ENCODE measurements at regions of chr2 and their contacts with region 1.

Region 1: DNA sequence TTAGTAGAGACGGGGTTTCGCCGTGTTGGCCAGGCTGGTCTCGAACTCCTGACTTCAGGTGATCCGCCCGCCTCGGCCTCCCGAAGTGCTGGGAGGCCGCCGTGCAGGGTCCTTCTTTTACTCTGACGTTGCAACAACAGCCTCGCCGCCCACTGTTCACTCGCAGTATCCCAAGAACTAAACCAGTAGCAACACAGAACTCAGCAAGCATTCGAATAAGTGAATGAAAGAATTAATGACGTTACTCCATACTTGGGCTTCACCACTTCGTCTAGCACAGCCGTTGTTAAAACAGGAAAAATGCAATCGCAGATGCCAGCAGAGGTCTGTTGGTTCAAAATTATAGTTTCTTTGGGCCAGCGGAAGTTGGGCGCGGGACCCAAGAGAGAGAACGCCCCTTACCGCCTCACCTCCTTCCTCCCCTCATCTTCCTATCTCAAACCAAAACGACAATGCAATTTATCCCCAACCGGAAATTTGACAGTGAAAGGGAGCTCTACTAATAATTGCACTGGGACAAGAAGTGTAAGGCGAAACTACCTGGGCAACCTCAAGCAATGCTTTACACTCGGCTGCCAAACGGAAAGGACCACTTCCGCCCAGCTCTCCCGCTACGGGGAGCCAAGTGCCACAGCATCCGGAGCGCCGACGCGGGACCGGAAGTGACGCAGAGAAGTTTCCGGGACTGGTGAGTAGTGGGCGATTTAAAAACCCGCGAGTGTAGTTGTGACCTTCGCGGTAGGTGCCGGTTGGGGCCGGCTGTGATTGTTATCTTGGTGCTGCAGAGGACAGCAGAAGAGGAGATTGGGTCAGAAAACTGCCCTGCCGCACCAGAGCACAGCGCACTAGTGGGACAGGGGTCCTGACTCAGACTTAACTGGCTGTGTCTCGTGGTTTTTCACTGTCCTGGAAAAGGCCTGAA is at the starts of genes NIF3L1 and PPIL3:
- DNase-seq: peak; percentile 93 to 99 (median 95)
- ATAC-seq: peak; percentile 67
- H3K4me3 ChIP-seq: peak within 1 kb of the TSS; percentile 64
- H3K4me3 Mint-ChIP-seq: peak within 1 kb of the TSS; percentile 94
- H3K27ac ChIP-seq: peak within 1 kb of the TSS; percentile 92 to 94
- H3K27ac Mint-ChIP-seq: peak within 1 kb of the TSS; percentile 99
- H3K4me1 ChIP-seq: peaks cover 36% of the 10 kb centered on the region
- H3K4me1 Mint-ChIP-seq: peaks cover 42% of the 10 kb centered on the region
- H3K27me3 ChIP-seq: no peaks in the 10 kb centered on the region
- H3K27me3 Mint-ChIP-seq: no peaks in the 10 kb centered on the region
- CTCF ChIP-seq: no peak
- total RNA-seq, gene NIF3L1: 6.1 to 6.7 TPM
- total RNA-seq, gene PPIL3: 23.1 to 29.8 TPM

Region 2: DNA sequence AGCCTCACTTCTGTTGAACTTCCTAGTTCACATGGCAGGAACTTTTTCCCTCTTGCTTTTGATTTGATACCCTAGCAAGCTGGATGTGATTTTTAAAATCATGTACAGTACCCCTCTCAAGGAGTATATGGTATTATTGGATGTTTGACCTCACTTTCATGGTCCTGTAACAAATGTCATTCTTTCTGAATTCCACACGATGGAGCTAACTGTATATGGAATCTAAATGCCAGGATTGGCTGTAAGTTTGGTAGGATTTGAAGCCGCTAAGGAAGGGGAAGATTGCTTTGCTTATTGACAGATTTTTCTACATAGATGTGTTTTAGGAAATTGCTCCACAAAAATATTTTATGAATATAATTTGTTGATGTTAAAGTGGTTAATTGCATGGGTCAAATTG is 915.3 kb before region 1 on chr2:
- CTCF ChIA-PET with region 1: no interaction called
- POLR2A ChIA-PET with region 1: no interaction called
- intact Hi-C with region 1: no loop called
- DNase-seq: no peak
- ATAC-seq: no peak
- H3K4me3 ChIP-seq: no peak overlapping the region
- H3K4me3 Mint-ChIP-seq: no peak overlapping the region
- H3K27ac ChIP-seq: no peak overlapping the region
- H3K27ac Mint-ChIP-seq: no peak overlapping the region
- H3K4me1 ChIP-seq: no peaks in the 10 kb centered on the region
- H3K4me1 Mint-ChIP-seq: no peaks in the 10 kb centered on the region
- H3K27me3 ChIP-seq: no peaks in the 10 kb centered on the region
- H3K27me3 Mint-ChIP-seq: no peaks in the 10 kb centered on the region
- CTCF ChIP-seq: peak; percentile 30

Region 3: DNA sequence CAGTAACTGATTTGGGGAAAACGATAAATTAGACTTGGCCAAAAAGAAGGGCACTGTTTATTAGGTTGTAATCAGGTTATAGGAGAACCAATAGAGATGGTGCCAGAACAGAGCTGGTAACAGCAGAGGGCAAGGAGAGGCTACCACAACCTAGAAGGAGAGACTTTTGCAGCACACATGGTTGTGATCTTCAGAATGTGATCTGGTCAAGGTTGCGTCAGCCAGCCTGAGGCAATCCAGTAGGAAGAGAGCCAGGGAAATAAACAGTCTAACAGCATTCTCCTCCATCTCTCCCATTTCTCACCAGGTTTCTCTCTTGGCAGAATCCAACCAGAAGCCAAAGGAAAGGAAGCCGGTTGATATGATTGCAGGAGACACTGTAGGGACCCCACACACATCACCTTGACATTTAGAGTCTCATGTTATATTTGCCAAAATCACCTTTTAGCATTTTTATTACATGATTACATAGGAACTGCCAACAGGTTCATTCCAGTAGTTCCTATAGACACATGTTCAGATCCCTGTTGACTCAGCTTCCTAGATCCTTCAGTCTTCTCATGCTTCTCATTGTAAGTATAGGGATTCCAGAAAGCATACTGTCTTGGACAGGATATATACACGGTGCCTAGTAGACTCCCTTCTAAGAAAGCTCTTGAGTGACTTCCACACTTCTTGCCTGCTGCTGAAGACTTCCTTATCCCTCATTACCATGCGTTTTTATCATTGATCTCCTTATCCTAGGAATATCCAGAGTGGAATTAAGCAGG is 600.1 kb before region 1 on chr2:
- CTCF ChIA-PET with region 1: no interaction called
- POLR2A ChIA-PET with region 1: no interaction called
- intact Hi-C with region 1: no loop called
- DNase-seq: no peak
- ATAC-seq: no peak
- H3K4me3 ChIP-seq: no peak overlapping the region
- H3K4me3 Mint-ChIP-seq: no peak overlapping the region
- H3K27ac ChIP-seq: no peak overlapping the region
- H3K27ac Mint-ChIP-seq: no peak overlapping the region
- H3K4me1 ChIP-seq: no peaks in the 10 kb centered on the region
- H3K4me1 Mint-ChIP-seq: no peaks in the 10 kb centered on the region
- H3K27me3 ChIP-seq: peaks cover 0 to under 1% of the 10 kb centered on the region in 2 experiments
- H3K27me3 Mint-ChIP-seq: peaks cover 26% of the 10 kb centered on the region
- CTCF ChIP-seq: no peak

Region 4: DNA sequence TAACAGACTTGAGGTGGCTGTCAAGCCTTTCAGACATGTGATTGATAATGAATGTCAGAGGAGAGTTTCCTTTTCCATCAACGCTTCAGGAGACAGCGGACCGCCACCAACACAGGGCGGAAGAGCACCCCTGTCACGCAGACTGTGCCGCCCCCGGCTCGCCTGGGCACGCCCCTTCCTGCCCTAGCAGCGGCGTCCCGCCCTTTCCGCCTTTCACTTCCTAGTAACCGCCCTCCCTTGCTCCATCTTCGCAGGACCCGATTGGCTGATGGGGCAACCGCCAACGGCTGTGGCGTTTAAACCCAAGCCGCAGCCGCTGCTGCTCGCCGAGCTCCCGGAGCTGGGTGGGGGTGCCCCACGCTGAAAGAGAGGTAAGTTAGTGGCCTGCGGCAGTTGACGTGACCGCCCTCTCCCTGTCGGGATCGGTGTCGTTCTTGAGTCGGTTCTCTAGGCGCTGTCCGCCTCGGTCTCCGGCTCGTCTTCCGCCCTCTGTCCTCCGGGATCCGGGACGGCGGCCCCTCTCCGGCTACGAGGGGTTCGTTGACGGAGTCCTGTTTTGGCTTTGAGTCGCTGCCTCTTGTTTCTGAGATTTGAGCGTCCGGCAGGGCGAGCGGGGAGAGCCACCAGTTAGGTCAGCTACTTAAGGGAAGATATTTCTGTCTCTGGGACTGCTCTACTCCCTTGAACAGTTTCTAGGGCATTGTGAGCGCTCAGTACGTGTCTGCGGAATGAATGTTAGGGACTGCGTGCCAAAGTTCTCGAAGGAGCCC is 362.9 kb before region 1 on chr2 and contains the start of gene SGO2:
- CTCF ChIA-PET with region 1: no interaction called
- POLR2A ChIA-PET with region 1: no interaction called
- intact Hi-C with region 1: loop called in 1 of 2 experiments (anchors 5 kb)
- DNase-seq: peak; percentile 90 to 98 (median 94)
- ATAC-seq: peak; percentile 99
- H3K4me3 ChIP-seq: peak within 1 kb of the TSS; percentile 71
- H3K4me3 Mint-ChIP-seq: peak within 1 kb of the TSS; percentile 96
- H3K27ac ChIP-seq: peak within 1 kb of the TSS in 1 of 2 donors; percentile 0
- H3K27ac Mint-ChIP-seq: peak within 1 kb of the TSS; percentile 83
- H3K4me1 ChIP-seq: peaks cover 9% of the 10 kb centered on the region
- H3K4me1 Mint-ChIP-seq: peaks cover 13% of the 10 kb centered on the region
- H3K27me3 ChIP-seq: no peaks in the 10 kb centered on the region
- H3K27me3 Mint-ChIP-seq: no peaks in the 10 kb centered on the region
- CTCF ChIP-seq: no peak
- total RNA-seq, gene SGO2: 0.64 to 0.74 TPM

Region 5: DNA sequence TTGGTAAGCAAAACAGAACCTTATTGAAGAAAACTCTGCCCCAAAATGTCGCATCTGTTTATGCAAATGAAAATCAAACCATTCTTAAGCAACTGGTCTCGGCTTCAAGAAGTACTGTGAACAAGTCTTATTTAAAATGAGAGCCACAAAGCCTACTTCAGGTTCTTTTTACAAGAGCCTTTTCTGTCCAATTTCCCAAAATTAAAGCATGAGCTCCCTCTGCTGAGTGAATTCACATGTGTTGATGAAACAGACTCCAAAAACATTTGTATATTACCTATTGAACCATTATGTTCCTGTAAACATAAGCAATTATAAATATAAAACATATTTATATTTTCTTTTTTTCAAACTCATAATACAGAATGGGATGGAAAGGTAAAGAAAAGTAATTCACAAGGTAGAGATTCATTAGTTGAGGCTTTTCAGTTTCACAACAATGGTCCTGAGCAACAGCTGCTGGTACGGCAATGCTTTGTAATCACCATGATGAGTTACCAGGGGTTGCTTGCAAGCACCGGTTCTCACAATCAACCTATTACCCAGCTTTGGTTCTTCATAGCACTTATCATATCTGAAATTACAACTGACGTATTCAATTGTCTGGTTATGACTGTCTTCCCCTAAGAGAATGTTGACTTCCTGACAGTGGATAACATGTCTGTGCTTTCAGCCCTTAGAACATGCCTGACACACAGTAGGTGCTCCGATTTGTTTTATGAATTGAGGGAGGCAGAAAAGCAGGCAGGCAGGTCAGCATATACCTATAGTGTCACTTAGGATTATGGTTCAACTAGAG is 185.6 kb before region 1 on chr2:
- CTCF ChIA-PET with region 1: no interaction called
- POLR2A ChIA-PET with region 1: no interaction called
- intact Hi-C with region 1: no loop called
- DNase-seq: peak in 3 of 14 experiments; percentile 29 to 54 (median 50)
- ATAC-seq: peak; percentile 49
- H3K4me3 ChIP-seq: no peak overlapping the region
- H3K4me3 Mint-ChIP-seq: no peak overlapping the region
- H3K27ac ChIP-seq: no peak overlapping the region
- H3K27ac Mint-ChIP-seq: no peak overlapping the region
- H3K4me1 ChIP-seq: no peaks in the 10 kb centered on the region
- H3K4me1 Mint-ChIP-seq: no peaks in the 10 kb centered on the region
- H3K27me3 ChIP-seq: no peaks in the 10 kb centered on the region
- H3K27me3 Mint-ChIP-seq: peaks cover 5% of the 10 kb centered on the region
- CTCF ChIP-seq: peak; percentile 29

Region 6: GRCh38 chr2:200765139-200765951 is 123.6 kb before region 1 on chr2:
- CTCF ChIA-PET with region 1: no interaction called
- POLR2A ChIA-PET with region 1: no interaction called
- intact Hi-C with region 1: no loop called
- DNase-seq: peak in 1 of 14 experiments; percentile 7
- ATAC-seq: peak; percentile 29
- H3K4me3 ChIP-seq: no peak overlapping the region
- H3K4me3 Mint-ChIP-seq: no peak overlapping the region
- H3K27ac ChIP-seq: no peak overlapping the region
- H3K27ac Mint-ChIP-seq: no peak overlapping the region
- H3K4me1 ChIP-seq: no peaks in the 10 kb centered on the region
- H3K4me1 Mint-ChIP-seq: no peaks in the 10 kb centered on the region
- H3K27me3 ChIP-seq: no peaks in the 10 kb centered on the region
- H3K27me3 Mint-ChIP-seq: no peaks in the 10 kb centered on the region
- CTCF ChIP-seq: no peak

Region 7: DNA sequence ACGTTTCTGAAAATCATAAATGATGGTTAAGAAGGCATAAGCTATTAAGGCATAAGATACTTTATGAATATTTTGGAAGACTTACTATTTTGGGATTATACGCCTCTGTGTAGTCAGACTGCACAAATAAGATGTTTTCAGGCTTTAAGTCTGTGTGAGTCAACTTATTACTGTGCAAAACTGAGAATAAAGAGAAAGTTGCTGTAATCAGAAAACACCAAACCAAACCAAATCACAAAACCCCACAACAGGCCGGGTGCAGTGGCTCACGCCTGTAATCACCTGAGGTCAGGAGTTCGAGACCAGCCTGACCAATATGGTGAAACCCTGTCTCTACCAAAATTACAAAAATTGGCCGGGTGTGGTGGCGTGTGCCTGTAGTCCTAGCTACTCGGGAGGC is 32.2 kb before region 1 on chr2:
- CTCF ChIA-PET with region 1: interaction called, 5 read pairs
- POLR2A ChIA-PET with region 1: interaction called, 23 read pairs
- intact Hi-C with region 1: loop called (anchors 5 kb)
- DNase-seq: no peak
- ATAC-seq: no peak
- H3K4me3 ChIP-seq: no peak overlapping the region
- H3K4me3 Mint-ChIP-seq: peak overlapping the region; percentile 38
- H3K27ac ChIP-seq: no peak overlapping the region
- H3K27ac Mint-ChIP-seq: peak overlapping the region; percentile 88
- H3K4me1 ChIP-seq: peaks cover 21% of the 10 kb centered on the region
- H3K4me1 Mint-ChIP-seq: peaks cover 71% of the 10 kb centered on the region
- H3K27me3 ChIP-seq: no peaks in the 10 kb centered on the region
- H3K27me3 Mint-ChIP-seq: no peaks in the 10 kb centered on the region
- CTCF ChIP-seq: no peak

Region 8: DNA sequence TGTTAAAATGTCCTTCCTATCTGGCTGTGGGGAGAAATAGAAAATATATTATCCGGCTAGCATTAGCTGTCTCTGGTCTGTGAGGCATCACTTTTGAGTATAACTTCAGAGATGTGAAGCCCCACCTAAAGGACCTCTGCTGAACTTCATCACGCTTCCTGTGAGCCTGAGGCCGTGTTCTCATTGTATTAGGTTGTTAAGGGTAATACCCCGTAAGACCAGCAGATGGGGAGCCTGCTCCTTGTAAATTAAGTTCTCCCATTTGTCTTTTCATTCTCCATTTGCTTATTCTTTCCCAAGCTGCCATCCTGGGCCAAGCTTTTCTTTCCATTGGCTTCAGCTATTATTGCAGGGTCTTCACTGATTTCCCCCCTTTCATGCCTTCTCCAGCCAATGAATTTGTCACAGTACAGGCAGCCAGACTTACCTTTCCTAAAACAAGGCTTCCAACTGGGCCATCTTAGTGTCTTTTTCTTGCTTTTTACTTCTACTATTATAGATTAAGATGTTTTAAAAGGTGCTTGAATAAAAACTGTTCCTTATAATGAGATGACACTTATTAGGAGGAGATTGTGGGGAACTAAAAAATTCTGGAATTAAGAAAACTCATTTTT is 12.6 kb after region 1 on chr2:
- CTCF ChIA-PET with region 1: interaction called, 16 read pairs
- POLR2A ChIA-PET with region 1: interaction called, 8 read pairs
- intact Hi-C with region 1: loop called in 1 of 2 experiments (anchors 1 kb)
- DNase-seq: peak; percentile 42 to 91 (median 57)
- ATAC-seq: peak; percentile 100
- H3K4me3 ChIP-seq: no peak overlapping the region
- H3K4me3 Mint-ChIP-seq: no peak overlapping the region
- H3K27ac ChIP-seq: no peak overlapping the region
- H3K27ac Mint-ChIP-seq: peak overlapping the region; percentile 21
- H3K4me1 ChIP-seq: no peaks in the 10 kb centered on the region
- H3K4me1 Mint-ChIP-seq: peaks cover 6% of the 10 kb centered on the region
- H3K27me3 ChIP-seq: no peaks in the 10 kb centered on the region
- H3K27me3 Mint-ChIP-seq: no peaks in the 10 kb centered on the region
- CTCF ChIP-seq: peak; percentile 84

Region 9: DNA sequence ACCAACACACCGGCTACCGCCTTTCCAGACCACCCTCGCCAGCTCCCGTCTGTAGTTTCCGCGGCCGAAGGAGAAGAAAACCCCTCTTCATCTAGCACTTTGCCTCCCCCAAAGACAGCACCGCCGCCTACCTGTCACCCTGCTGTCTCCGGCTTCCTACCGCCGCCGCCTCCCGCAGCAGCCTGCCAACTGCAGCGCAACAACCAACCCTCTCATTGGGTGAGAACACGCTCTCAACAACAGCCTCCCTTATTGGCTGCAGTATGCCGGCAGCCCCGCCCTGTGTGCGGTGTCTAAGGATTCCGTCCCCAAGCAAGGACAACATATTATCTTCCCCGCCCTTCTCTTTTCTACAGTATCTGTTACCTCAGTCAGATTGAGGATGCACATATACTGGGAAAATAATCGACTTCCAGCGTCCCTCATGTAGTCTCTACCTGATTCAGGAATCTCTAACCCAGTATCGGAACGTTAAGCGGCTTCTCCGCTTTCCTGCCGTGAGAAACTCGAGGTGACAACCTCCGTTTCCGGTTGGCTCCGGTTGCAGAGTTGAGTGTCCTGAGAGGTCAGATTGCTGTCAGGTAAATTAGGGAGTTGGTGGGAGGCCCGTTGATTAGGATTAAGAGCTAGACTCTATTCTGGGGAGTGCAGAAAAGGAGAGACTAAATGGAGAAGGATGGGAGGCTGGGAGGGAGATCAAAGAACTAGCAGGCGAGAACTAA is 182.7 kb after region 1 on chr2 and contains the starts of genes HYCC2 and NDUFB3:
- CTCF ChIA-PET with region 1: interaction called, 6 read pairs
- POLR2A ChIA-PET with region 1: interaction called, 11 read pairs
- intact Hi-C with region 1: loop called in 1 of 2 experiments (anchors 1 kb)
- DNase-seq: peak; percentile 85 to 98 (median 90)
- ATAC-seq: peak; percentile 92
- H3K4me3 ChIP-seq: peak within 1 kb of the TSS; percentile 87
- H3K4me3 Mint-ChIP-seq: peak within 1 kb of the TSS; percentile 99
- H3K27ac ChIP-seq: peak within 1 kb of the TSS; percentile 84 to 93
- H3K27ac Mint-ChIP-seq: peak within 1 kb of the TSS; percentile 97
- H3K4me1 ChIP-seq: peaks cover 18% of the 10 kb centered on the region
- H3K4me1 Mint-ChIP-seq: peaks cover 50% of the 10 kb centered on the region
- H3K27me3 ChIP-seq: no peaks in the 10 kb centered on the region
- H3K27me3 Mint-ChIP-seq: no peaks in the 10 kb centered on the region
- CTCF ChIP-seq: peak; percentile 39
- total RNA-seq, gene HYCC2: 29.2 to 30.7 TPM
- total RNA-seq, gene NDUFB3: 10.1 to 13.6 TPM

Region 10: GRCh38 chr2:202265467-202266277 is 1376.7 kb after region 1 on chr2 and contains the start of gene NOP58:
- CTCF ChIA-PET with region 1: no interaction called
- POLR2A ChIA-PET with region 1: no interaction called
- intact Hi-C with region 1: loop called in 1 of 2 experiments (anchors 2 kb)
- DNase-seq: peak; percentile 75 to 97 (median 84)
- ATAC-seq: peak; percentile 80
- H3K4me3 ChIP-seq: peak within 1 kb of the TSS; percentile 97
- H3K4me3 Mint-ChIP-seq: peak within 1 kb of the TSS; percentile 80
- H3K27ac ChIP-seq: peak within 1 kb of the TSS; percentile 97 to 99
- H3K27ac Mint-ChIP-seq: no peak within 1 kb of the TSS
- H3K4me1 ChIP-seq: peaks cover 29% of the 10 kb centered on the region
- H3K4me1 Mint-ChIP-seq: peaks cover 21% of the 10 kb centered on the region
- H3K27me3 ChIP-seq: no peaks in the 10 kb centered on the region
- H3K27me3 Mint-ChIP-seq: no peaks in the 10 kb centered on the region
- CTCF ChIP-seq: no peak
- total RNA-seq, gene NOP58: 280 to 288 TPM